Ascending aorta (tissue), 2 donors: ENCODE measurements at regions of chr7 and their contacts with region 1.

Region 1: DNA sequence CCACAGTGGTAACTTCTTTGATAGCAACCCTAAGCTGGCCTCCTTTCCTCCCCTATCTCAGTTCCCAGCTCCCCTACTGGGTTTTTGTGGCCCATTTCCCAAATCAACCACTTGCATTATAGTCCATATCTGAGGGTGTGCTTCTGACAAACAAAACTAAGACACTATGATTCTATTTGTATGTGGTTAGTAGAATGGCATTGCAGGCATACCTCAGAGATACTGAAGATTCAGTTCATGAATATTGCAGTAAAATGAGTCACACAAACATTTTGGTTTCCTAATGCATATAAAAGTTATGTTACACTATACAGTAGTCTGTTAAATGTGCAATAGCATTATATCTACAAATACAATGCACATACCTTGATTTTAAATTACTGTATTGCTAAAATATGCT is 15.4 kb upstream of the TMEM243 start:
- DNase-seq: no peak
- H3K4me3 ChIP-seq: no peak overlapping the region
- H3K27ac ChIP-seq: no peak overlapping the region
- H3K4me1 ChIP-seq: peaks cover 3 to 8% of the 10 kb centered on the region in 2 donors
- H3K27me3 ChIP-seq: no peaks in the 10 kb centered on the region
- CTCF ChIP-seq: no peak

Region 2: GRCh38 chr7:86926732-86927131 is 308.2 kb before region 1 on chr7:
- intact Hi-C with region 1: loop called (anchors 1 kb)
- DNase-seq: no peak
- H3K4me3 ChIP-seq: no peak overlapping the region
- H3K27ac ChIP-seq: no peak overlapping the region
- H3K4me1 ChIP-seq: peaks cover 0 to 2% of the 10 kb centered on the region in 2 donors
- H3K27me3 ChIP-seq: no peaks in the 10 kb centered on the region
- CTCF ChIP-seq: peak in 2 of 3 experiments; percentile 65 to 69